ENCODE measurements at regions of chr1 and their contacts with region 1.

Region 1: GRCh38 chr1:45512641-45513054 is 9.0 kb downstream of the PRDX1 start:
- DNase-seq: peak; percentile 80
- H3K4me3 ChIP-seq: no peak overlapping the region
- H3K27ac ChIP-seq: no peak overlapping the region
- H3K4me1 ChIP-seq: no peaks in the 10 kb centered on the region
- H3K27me3 ChIP-seq: no peaks in the 10 kb centered on the region
- CTCF ChIP-seq: peak in 2 of 3 experiments; percentile 36 to 59
- POLR2A ChIP-seq: no peak

Region 2: DNA sequence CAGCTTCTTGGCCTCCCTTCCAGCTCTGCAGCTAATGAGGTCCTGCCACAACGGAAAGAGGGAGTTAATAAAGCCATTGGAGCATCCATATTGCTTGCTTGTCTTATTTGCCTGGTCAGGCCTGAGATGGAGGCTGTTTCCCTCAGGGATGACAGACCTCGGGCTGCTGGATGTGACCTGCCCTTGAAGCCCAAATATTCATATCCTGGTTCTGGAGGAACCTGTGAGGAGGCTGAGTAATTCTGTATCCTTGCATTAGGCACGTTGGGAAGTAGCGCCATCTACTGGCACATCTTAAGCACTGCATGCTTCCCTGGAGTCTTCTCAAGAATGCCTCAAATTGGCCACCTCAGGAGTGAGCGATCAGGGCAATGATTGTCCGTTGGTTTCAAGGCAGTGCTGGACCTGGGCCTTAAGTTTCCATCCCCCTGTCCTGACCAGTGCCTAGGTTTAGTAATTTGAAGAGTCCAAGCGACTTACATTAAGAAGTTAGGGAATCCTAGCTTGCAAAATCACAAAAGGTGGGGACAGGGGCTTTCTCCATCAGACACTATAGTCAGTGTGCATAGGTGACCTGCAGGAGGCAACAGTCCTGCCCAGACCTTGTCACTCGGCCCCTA is 57.4 kb after region 1 on chr1:
- intact Hi-C with region 1: loop called (anchors 10 kb)
- DNase-seq: peak; percentile 75
- H3K4me3 ChIP-seq: no peak overlapping the region
- H3K27ac ChIP-seq: no peak overlapping the region
- H3K4me1 ChIP-seq: no peaks in the 10 kb centered on the region
- H3K27me3 ChIP-seq: no peaks in the 10 kb centered on the region
- CTCF ChIP-seq: peak; percentile 88 to 99 (median 93)
- POLR2A ChIP-seq: no peak

Region 3: GRCh38 chr1:45643978-45644377 is 131.3 kb after region 1 on chr1:
- intact Hi-C with region 1: no loop called
- DNase-seq: peak; percentile 42
- H3K4me3 ChIP-seq: no peak overlapping the region
- H3K27ac ChIP-seq: peak overlapping the region; percentile 16 to 39
- H3K4me1 ChIP-seq: no peaks in the 10 kb centered on the region
- H3K27me3 ChIP-seq: no peaks in the 10 kb centered on the region
- CTCF ChIP-seq: no peak
- POLR2A ChIP-seq: no peak